ENCODE measurements at regions of chr15 and their contacts with region 1.

Region 1: DNA sequence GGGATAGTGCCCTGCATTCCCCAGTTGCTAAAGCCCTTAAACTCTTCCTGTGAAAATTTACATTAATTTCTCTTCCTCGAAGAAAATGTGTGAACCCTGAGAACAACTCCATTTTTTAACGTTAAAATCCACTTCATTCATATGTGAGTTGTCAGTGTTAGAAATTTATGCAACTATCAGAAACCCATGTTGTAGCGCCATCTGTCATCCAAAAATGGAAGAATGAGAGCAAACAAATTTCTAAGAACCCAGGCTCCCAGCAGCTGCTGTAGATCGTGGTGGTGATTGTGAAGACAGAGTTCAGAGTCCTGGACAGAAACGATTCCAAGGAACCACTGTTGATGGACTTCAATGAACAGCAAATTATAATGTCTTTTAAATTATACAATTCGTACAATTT is 179.7 kb upstream of the NDN start:
- DNase-seq: peak; percentile 41
- ATAC-seq: no peak
- H3K4me3 ChIP-seq: no peak overlapping the region
- H3K27ac ChIP-seq: no peak overlapping the region
- H3K4me1 ChIP-seq: no peaks in the 10 kb centered on the region
- H3K27me3 ChIP-seq: no peaks in the 10 kb centered on the region
- CTCF ChIP-seq: peak; percentile 51

Region 2: DNA sequence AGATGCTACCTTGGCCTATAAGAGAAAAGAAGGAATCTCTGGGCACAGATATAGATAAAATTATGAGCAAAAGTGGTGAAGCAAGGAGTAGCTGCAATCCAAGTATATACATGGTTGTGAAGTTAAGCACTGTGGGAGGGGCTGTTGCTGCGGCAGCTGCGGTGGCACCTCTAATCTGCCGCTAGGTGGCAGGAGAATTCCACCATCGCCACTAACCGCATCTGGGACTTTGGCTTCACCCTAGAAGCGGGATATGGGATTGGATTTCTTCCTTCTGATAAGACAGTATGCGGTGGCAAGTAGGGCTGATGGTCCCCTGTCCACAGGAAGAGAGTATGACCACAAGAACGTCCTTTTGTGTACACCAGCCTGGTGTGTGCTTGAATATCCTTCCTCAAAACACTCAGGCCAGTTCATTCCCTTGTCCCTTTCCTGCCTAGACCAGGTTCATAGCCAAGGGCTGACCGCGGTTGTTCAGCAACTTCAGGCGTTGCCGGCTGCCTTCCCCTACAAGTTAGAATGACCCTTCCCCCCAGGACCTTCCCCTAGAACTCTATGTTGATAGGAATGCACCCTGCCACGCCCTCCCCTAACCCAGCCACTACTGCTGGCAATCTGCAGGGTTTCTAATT is 224.3 kb before region 1 on chr15:
- CTCF ChIA-PET with region 1: no interaction called
- POLR2A ChIA-PET with region 1: no interaction called
- intact Hi-C with region 1: loop called (anchors 1 kb)
- DNase-seq: peak; percentile 78
- ATAC-seq: peak; percentile 88
- H3K4me3 ChIP-seq: no peak overlapping the region
- H3K27ac ChIP-seq: no peak overlapping the region
- H3K4me1 ChIP-seq: no peaks in the 10 kb centered on the region
- H3K27me3 ChIP-seq: peaks cover 23% of the 10 kb centered on the region
- CTCF ChIP-seq: peak; percentile 90

Measured in PC-3 (cell line).